ENCODE measurements at regions of chr12 and their contacts with region 1.

Region 1: DNA sequence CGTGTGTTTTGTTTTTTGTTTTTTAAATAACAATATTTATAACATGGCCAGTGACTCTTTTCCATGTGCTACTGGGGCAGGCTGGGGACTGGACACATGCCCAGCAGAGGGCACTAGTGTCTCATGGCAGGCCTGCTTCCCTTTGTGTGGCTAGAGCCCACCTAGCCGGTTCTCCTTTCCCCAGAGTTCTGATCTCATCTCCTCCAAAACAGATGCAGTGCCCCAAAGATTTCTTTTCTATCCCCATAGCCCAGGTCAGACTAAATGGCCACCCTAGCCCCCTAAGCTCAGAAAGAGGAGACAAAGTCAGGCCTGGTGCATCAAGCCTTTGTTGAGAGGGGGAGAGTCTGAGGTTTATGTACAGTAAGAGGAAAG is 21.2 kb downstream of the PRPF40B start:
- DNase-seq: peak; percentile 89
- ATAC-seq: peak; percentile 96
- H3K4me3 Mint-ChIP-seq: no peak overlapping the region
- H3K27ac Mint-ChIP-seq: peak overlapping the region; percentile 87
- H3K4me1 Mint-ChIP-seq: peaks cover 41% of the 10 kb centered on the region
- H3K27me3 Mint-ChIP-seq: no peaks in the 10 kb centered on the region

Region 2: DNA sequence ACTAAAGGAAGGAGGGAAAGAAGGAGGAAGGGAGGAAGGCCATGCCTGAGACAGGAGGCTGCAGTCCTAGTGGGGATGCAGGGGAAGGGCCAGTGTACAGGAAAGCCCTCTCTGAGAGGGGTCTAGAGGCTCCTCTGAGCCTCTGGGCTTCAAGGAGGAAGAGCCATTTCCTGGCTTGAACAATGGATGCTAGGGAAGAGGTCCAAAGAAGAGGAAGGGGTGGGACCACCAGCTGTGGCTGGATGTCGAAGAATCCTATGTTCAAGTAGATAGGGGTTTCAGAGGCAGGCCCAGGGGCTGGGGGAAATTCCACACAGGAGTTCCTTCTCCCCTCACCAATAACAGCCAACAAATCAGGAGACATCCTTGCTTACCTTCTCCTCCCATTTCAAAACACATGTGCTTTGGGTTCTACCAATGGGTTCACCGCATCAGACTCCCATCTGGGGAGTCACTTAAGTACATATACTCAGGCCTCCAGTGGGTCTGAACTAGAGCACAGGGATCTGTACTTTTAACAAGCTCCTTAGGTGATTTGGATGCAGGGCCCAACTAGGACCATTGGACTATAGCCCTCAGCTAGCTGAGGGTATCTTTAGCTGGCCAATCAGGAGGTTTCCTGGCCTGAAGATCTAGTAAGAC is 11.1 kb after region 1 on chr12:
- CTCF ChIA-PET with region 1: interaction called, 27 read pairs
- POLR2A ChIA-PET with region 1: interaction called, 4 read pairs
- DNase-seq: no peak
- ATAC-seq: no peak
- H3K4me3 Mint-ChIP-seq: no peak overlapping the region
- H3K27ac Mint-ChIP-seq: peak overlapping the region; percentile 78
- H3K4me1 Mint-ChIP-seq: peaks cover 25% of the 10 kb centered on the region
- H3K27me3 Mint-ChIP-seq: no peaks in the 10 kb centered on the region